Activated naive CD4-positive, alpha-beta T cell treated with anti-CD3 and anti-CD28 coated beads, Interleukin-2, amount 10 ng/mL, durations not matched to agents 7 days and 5 days (primary cell): ENCODE measurements at regions of chr1 and their contacts with region 1.

Region 1: GRCh38 chr1:181142096-181142958 is 53.8 kb downstream of the IER5 start:
- DNase-seq: peak; percentile 91
- H3K4me3 Mint-ChIP-seq: no peak overlapping the region
- H3K27ac Mint-ChIP-seq: peak overlapping the region; percentile 63
- H3K4me1 Mint-ChIP-seq: peaks cover 59% of the 10 kb centered on the region
- H3K27me3 Mint-ChIP-seq: peaks cover 38% of the 10 kb centered on the region

Region 2: GRCh38 chr1:180863158-180863775 is 279.1 kb before region 1 on chr1:
- CTCF ChIA-PET with region 1: interaction called, 16 read pairs
- DNase-seq: no peak
- H3K4me3 Mint-ChIP-seq: no peak overlapping the region
- H3K27ac Mint-ChIP-seq: no peak overlapping the region
- H3K4me1 Mint-ChIP-seq: no peaks in the 10 kb centered on the region
- H3K27me3 Mint-ChIP-seq: no peaks in the 10 kb centered on the region

Region 3: GRCh38 chr1:181033799-181034451 is 108.4 kb before region 1 on chr1 and contains the start of gene MR1:
- CTCF ChIA-PET with region 1: interaction called, 169 read pairs
- DNase-seq: peak; percentile 57
- H3K4me3 Mint-ChIP-seq: peak within 1 kb of the TSS; percentile 95
- H3K27ac Mint-ChIP-seq: peak within 1 kb of the TSS; percentile 95
- H3K4me1 Mint-ChIP-seq: peaks cover 54% of the 10 kb centered on the region
- H3K27me3 Mint-ChIP-seq: no peaks in the 10 kb centered on the region

Region 4: GRCh38 chr1:181079382-181079781 is 62.9 kb before region 1 on chr1:
- CTCF ChIA-PET with region 1: interaction called, 120 read pairs
- DNase-seq: no peak
- H3K4me3 Mint-ChIP-seq: no peak overlapping the region
- H3K27ac Mint-ChIP-seq: no peak overlapping the region
- H3K4me1 Mint-ChIP-seq: peaks cover 17% of the 10 kb centered on the region
- H3K27me3 Mint-ChIP-seq: peaks cover 54% of the 10 kb centered on the region

Region 5: DNA sequence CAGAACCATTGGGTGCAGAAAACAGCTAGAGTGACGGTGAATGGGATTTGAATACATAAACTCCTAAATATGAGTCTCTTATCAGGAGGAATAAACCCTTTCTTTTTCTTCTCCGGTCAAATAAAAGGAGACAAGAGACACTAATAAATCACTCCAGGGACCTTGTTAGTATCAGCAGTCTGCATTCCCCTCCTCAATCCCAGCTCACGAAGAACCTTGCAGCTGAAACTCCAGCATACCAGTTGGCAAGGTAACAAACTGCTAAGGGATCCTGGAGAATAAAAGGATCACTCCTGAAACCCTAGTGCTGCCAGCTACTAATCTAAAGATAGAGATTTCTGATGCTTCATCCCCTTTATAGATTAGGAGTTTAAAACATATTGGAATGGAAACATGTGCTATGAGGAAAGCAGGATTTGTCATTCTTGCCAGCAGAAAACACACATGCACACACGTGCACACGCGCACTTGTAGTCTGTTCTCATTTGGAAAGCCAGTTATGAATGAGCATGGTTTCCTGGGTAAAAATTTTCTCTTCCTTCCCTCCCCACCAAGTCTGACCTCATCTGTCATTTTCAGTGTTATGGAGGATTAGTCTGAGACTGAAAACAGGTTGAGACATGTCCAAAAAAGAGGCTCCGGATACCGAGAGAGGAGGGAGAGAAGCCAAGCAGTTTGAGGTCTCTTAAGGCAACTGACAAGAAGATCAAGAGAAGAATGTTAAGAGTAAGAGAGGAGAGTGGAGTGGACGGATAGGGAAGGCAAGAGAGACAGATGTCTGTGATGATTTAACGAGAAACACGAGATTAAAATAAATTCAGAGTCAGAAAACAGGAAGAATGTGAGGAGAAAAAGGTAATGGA is 42.9 kb before region 1 on chr1:
- CTCF ChIA-PET with region 1: interaction called, 59 read pairs
- DNase-seq: peak; percentile 41
- H3K4me3 Mint-ChIP-seq: peak overlapping the region; percentile 33
- H3K27ac Mint-ChIP-seq: peak overlapping the region; percentile 89
- H3K4me1 Mint-ChIP-seq: peaks cover 84% of the 10 kb centered on the region
- H3K27me3 Mint-ChIP-seq: peaks cover under 1% of the 10 kb centered on the region

Region 6: DNA sequence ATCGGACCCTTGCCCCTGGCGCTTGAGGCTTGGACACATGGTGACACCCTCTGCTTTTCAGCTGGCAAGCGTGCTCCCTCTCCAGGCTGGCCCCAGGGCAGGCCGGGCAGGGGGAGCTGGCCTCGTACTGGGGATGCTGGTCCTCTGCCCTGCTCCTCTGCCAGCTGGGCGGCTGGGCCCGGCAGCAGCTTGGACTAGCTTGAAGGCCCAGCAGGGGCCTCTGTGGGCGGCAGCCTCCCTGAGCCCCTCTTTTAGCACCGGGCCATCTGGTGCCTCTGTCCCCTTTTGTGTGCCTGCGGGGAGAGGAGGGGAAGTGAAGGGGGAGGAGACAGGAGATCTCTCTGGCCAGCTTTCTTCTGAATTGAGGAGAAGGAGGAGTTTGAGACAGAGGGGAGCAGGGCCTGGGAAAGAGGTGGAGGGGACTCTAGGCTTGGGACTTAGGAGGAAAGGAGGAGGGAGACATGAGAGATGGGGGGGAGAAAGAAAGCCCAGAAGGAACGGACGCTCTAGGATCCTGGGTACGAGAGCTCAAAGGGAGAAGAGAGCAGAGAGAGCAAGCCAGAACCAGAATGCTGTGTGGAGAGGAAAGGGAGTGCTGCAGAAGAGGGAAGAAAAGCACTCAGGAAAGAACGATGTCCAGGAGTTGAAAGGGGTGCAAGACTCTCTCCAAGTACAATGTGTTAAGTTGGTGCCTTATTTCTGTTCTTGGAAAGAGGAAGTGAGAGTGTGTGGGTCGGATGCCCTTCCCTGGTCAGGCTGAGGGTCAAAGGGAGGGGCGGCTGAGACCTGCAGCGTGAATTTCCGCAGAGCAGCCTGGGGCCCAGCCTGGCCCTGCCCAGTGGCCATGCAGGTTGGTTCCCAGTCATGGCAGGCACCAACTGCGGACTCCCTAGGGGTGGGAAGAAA is 13.5 kb before region 1 on chr1:
- CTCF ChIA-PET with region 1: interaction called, 13 read pairs
- DNase-seq: no peak
- H3K4me3 Mint-ChIP-seq: no peak overlapping the region
- H3K27ac Mint-ChIP-seq: no peak overlapping the region
- H3K4me1 Mint-ChIP-seq: peaks cover 30% of the 10 kb centered on the region
- H3K27me3 Mint-ChIP-seq: peaks cover 51% of the 10 kb centered on the region

Region 7: GRCh38 chr1:181159451-181160140 is 17.3 kb after region 1 on chr1:
- CTCF ChIA-PET with region 1: interaction called, 46 read pairs
- DNase-seq: peak; percentile 74
- H3K4me3 Mint-ChIP-seq: peak overlapping the region; percentile 62
- H3K27ac Mint-ChIP-seq: peak overlapping the region; percentile 92
- H3K4me1 Mint-ChIP-seq: peaks cover 40% of the 10 kb centered on the region
- H3K27me3 Mint-ChIP-seq: peaks cover 43% of the 10 kb centered on the region